ENCODE measurements at regions of chr7 and their contacts with region 1.

Region 1: GRCh38 chr7:71752171-71752935 is 620.4 kb downstream of the GALNT17 start:
- DNase-seq: peak; percentile 93
- ATAC-seq: peak; percentile 95
- H3K4me3 Mint-ChIP-seq: peak overlapping the region; percentile 58
- H3K27ac Mint-ChIP-seq: no peak overlapping the region
- H3K4me1 Mint-ChIP-seq: peaks cover 12% of the 10 kb centered on the region
- H3K27me3 Mint-ChIP-seq: peaks cover 23% of the 10 kb centered on the region
- CTCF ChIP-seq: peak; percentile 85

Region 2: DNA sequence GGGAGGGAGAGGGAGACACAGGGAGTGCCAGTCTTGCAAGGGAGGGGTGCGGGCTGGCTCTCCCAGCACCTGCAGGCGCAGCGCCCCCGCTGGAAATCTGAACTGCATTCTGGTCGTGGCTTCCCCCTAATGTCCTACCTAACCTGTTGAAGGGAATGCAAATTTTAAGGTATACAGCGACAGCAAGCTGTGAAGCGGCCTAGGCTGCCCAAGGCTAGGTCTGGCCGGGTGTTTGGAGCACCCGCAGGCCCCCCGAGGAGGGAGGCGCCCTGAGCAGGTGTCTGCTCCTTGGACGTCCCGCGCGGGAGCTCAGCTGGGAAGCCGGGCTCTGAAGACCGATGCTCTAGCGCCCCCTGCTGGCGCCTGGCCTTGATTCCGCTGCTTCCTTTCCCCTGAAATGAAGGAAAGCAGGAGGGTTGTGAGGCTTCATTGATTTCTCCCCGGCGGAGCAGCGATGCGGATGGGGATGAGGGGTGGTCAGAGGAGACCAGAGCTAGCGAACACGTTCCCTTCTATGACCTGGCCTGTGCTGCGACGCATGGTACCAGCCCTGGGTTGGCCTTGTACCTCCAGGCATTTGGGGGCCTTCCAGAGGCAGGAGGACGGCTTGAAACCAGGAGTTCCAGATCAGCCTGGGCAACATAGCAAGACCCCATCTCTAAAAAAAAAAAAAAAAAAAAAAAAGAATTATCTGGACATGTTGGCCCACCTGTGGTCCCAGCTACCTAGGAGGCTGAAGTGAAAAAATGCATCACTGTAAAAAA is 19.1 kb before region 1 on chr7:
- CTCF ChIA-PET with region 1: interaction called, 40 read pairs
- POLR2A ChIA-PET with region 1: no interaction called
- DNase-seq: peak; percentile 97
- ATAC-seq: peak; percentile 80
- H3K4me3 Mint-ChIP-seq: peak overlapping the region; percentile 61
- H3K27ac Mint-ChIP-seq: no peak overlapping the region
- H3K4me1 Mint-ChIP-seq: peaks cover 18% of the 10 kb centered on the region
- H3K27me3 Mint-ChIP-seq: no peaks in the 10 kb centered on the region
- CTCF ChIP-seq: peak; percentile 97

Region 3: DNA sequence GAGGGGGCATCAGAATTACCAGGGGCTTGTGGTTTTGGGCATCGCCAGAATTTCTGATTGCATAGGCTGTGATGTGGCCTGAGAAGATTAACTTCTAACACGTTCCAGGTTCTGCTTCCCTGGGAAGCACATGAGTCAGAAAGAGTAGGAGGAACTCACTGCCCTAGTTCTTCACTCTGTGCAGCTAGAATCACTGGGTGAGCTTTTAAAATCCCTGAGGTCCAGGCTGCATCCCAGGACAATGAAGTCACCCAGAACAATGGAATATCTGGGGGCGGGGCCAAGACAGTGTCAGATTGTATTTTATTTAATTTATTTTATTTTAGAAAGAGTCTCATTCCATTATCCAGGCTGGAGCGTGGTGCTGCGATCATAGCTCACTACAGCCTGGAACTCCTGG is 23.3 kb after region 1 on chr7:
- CTCF ChIA-PET with region 1: interaction called, 18 read pairs
- POLR2A ChIA-PET with region 1: no interaction called
- DNase-seq: no peak
- ATAC-seq: no peak
- H3K4me3 Mint-ChIP-seq: no peak overlapping the region
- H3K27ac Mint-ChIP-seq: no peak overlapping the region
- H3K4me1 Mint-ChIP-seq: peaks cover 10% of the 10 kb centered on the region
- H3K27me3 Mint-ChIP-seq: no peaks in the 10 kb centered on the region; the same call in 1 of the 2 replicates
- CTCF ChIP-seq: no peak

Region 4: DNA sequence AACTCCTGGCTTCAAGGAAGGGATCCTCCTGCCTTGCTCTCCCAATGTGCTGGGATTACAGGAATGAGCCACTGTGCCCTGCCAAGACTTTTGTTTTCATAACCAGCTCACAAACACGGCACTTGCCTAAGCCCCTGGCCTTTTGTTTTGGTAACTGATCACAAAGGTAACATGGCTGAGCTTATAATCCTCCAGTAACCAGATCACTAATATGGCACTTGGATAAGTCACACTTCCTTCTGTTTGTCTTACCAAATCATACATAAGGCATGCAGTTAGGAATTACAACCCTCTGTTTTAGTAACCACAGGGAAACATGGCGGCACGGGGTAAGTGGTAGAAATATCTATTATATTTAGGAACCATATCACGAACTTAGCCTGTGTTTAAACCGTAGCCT is 82.7 kb after region 1 on chr7:
- CTCF ChIA-PET with region 1: interaction called, 10 read pairs
- POLR2A ChIA-PET with region 1: no interaction called
- DNase-seq: no peak
- ATAC-seq: no peak
- H3K4me3 Mint-ChIP-seq: no peak overlapping the region
- H3K27ac Mint-ChIP-seq: no peak overlapping the region
- H3K4me1 Mint-ChIP-seq: peaks cover 4% of the 10 kb centered on the region; the same call in 1 of the 2 replicates
- H3K27me3 Mint-ChIP-seq: no peaks in the 10 kb centered on the region
- CTCF ChIP-seq: no peak

Region 5: GRCh38 chr7:71854546-71855397 is 102.4 kb after region 1 on chr7:
- CTCF ChIA-PET with region 1: interaction called, 19 read pairs
- POLR2A ChIA-PET with region 1: no interaction called
- DNase-seq: no peak
- ATAC-seq: no peak
- H3K4me3 Mint-ChIP-seq: no peak overlapping the region
- H3K27ac Mint-ChIP-seq: no peak overlapping the region
- H3K4me1 Mint-ChIP-seq: no peaks in the 10 kb centered on the region
- H3K27me3 Mint-ChIP-seq: no peaks in the 10 kb centered on the region; the same call in 1 of the 2 replicates
- CTCF ChIP-seq: no peak

Region 6: DNA sequence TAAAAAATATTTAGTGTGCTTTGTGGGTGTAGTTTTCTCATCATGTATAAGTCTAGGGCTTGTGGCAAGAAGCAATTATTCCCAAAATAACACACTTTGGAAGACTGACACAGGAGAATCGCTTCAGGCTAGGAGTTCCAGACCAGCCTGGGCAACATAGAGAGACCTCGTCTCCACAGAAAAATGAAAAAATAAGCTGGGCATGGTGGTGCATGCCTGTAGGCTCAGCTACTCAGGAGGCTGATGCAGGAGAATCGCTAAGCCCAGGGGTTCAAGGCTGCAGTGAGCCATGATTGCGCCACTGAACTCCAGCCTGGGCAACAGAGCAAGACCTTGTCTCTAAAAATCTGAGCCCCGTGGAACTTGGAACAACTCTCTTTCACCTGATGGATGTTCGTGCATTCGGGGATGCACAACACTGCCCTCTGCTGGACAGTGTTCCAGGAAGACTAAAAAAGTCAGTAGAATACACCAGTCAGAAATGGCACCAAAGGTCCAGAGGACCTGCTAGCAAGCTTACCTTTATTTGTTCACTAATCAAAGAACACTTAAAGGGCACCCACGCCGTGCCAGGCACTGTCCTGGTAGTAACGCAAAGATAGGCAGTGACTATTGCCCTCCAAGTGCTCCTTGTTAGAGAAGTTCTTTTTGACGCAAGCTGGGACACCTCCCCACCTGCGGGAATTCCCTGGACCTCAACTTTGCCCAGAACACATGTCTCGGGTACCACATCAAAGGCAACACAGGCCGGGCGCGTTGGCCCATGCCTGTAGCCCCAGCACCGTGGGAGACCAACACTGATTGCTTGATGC is 741.7 kb after region 1 on chr7:
- CTCF ChIA-PET with region 1: interaction called, 10 read pairs
- POLR2A ChIA-PET with region 1: no interaction called
- DNase-seq: peak; percentile 83
- ATAC-seq: peak; percentile 68; the same call in 1 of the 2 replicates
- H3K4me3 Mint-ChIP-seq: no peak overlapping the region
- H3K27ac Mint-ChIP-seq: no peak overlapping the region
- H3K4me1 Mint-ChIP-seq: no peaks in the 10 kb centered on the region
- H3K27me3 Mint-ChIP-seq: no peaks in the 10 kb centered on the region; the same call in 1 of the 2 replicates
- CTCF ChIP-seq: peak; percentile 82

Measured in WTC11 (cell line).